ENCODE measurements at regions of chr2 and their contacts with region 1.

Region 1: DNA sequence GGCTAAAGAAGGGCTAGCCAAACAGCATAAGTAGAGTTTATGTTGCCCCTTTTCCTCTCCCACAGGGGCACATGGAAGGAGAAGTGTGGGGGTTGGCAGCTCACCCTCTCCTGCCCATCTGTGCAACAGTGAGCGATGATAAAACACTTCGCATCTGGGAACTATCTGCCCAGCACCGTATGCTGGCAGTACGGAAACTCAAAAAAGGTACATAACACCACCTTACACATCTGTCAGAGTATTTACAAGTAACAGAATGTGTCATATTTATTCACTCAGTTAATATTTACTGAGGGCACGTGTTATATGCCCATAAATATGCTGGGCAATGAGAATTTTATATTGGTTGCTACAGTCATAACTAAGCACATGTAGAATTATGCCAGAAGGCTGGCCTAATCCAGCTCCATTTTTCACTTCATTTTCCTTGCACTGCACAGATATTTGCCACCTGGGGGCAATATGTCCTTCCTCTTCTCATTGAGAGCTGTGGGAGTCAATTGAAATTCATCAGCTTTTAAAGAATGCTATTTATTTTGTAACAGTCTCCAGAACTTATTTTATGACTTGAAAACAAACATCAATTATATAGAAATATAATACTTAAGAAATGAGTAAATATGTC is 150.6 kb downstream of the RTN4 start:
- DNase-seq: no peak
- H3K4me3 ChIP-seq: no peak overlapping the region
- H3K27ac ChIP-seq: peak overlapping the region in 1 of 4 donors; percentile 11
- H3K4me1 ChIP-seq: peaks cover 3 to 17% (median 13%) of the 10 kb centered on the region in 4 donors
- H3K27me3 ChIP-seq: no peaks in the 10 kb centered on the region
- CTCF ChIP-seq: peak; percentile 38 to 57 (median 48)
- EP300 ChIP-seq: no peak
- POLR2A ChIP-seq: no peak

Region 2: GRCh38 chr2:53104263-53104662 is 1795.4 kb before region 1 on chr2:
- in situ Hi-C with region 1: no loop called
- intact Hi-C with region 1: no loop called
- DNase-seq: no peak
- H3K4me3 ChIP-seq: no peak overlapping the region
- H3K27ac ChIP-seq: no peak overlapping the region
- H3K4me1 ChIP-seq: peaks cover 0 to 4% (median 0%) of the 10 kb centered on the region in 4 donors
- H3K27me3 ChIP-seq: no peaks in the 10 kb centered on the region
- CTCF ChIP-seq: no peak
- EP300 ChIP-seq: no peak
- POLR2A ChIP-seq: no peak

Region 3: DNA sequence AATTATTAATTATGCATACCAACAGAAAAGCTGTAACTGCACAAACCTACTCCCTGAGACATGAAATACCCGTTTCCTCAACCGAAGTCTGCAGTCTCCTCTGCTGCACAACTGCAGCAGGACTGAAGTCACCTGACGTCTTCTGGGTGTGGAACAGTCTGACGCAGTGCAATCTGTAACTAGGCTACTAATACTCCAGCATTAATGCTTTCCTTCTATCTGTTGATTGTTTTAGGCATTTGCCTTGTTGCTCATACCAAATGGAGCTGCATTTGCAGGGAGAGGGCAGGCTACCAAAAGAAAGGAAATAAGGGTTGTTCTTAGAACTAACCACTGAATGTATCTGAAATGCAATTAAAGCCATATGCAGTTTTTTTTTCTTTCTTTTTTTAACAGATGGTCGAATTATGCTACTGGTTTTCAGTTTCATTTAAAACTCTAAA is 110.5 kb after region 1 on chr2:
- in situ Hi-C with region 1: loop called in 1 of 4 experiments (anchors 10 kb)
- intact Hi-C with region 1: no loop called
- DNase-seq: peak; percentile 75
- H3K4me3 ChIP-seq: peak overlapping the region; percentile 15 to 49 (median 34)
- H3K27ac ChIP-seq: peak overlapping the region; percentile 71 to 82 (median 78)
- H3K4me1 ChIP-seq: peaks cover 34 to 97% (median 89%) of the 10 kb centered on the region in 4 donors
- H3K27me3 ChIP-seq: no peaks in the 10 kb centered on the region
- CTCF ChIP-seq: no peak
- EP300 ChIP-seq: no peak
- POLR2A ChIP-seq: peak; percentile 85

Region 4: DNA sequence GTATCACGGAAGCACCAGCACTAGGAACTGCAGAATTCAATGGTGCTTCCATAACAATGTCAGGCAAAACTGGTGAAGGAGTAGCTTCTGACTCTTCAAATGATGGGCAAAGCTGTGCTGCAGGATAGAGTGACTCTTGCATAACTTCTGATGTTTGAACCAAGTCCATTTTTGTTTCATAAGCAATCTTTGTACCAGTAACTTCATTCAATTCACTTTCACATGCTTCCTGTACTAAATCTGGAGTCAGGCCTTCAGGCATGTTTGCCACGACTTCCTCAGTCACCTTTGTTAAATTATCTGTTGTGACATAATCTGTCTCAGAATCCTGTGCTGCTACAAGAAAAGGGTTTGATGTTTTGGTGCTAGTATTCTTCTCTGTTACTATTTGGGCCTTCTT is 126.5 kb after region 1 on chr2:
- in situ Hi-C with region 1: no loop called
- intact Hi-C with region 1: no loop called
- DNase-seq: no peak
- H3K4me3 ChIP-seq: no peak overlapping the region
- H3K27ac ChIP-seq: peak overlapping the region in 1 of 4 donors; percentile 2
- H3K4me1 ChIP-seq: peaks cover 13 to 74% (median 18%) of the 10 kb centered on the region in 4 donors
- H3K27me3 ChIP-seq: no peaks in the 10 kb centered on the region
- CTCF ChIP-seq: no peak
- EP300 ChIP-seq: no peak
- POLR2A ChIP-seq: no peak

Region 5: GRCh38 chr2:55175254-55176025 is 275.8 kb after region 1 on chr2:
- in situ Hi-C with region 1: loop called in 3 of 4 experiments (anchors 10 to 25 kb)
- intact Hi-C with region 1: loop called (anchors 10 kb)
- DNase-seq: no peak
- H3K4me3 ChIP-seq: no peak overlapping the region
- H3K27ac ChIP-seq: no peak overlapping the region
- H3K4me1 ChIP-seq: peaks cover 0 to 4% (median 0%) of the 10 kb centered on the region in 4 donors
- H3K27me3 ChIP-seq: no peaks in the 10 kb centered on the region
- CTCF ChIP-seq: peak; percentile 50 to 70 (median 56)
- EP300 ChIP-seq: no peak
- POLR2A ChIP-seq: no peak

Measured in transverse colon (tissue), 4 donors.